T-cell (primary cell): ENCODE measurements at regions of chr6 and their contacts with region 1.

Region 1: DNA sequence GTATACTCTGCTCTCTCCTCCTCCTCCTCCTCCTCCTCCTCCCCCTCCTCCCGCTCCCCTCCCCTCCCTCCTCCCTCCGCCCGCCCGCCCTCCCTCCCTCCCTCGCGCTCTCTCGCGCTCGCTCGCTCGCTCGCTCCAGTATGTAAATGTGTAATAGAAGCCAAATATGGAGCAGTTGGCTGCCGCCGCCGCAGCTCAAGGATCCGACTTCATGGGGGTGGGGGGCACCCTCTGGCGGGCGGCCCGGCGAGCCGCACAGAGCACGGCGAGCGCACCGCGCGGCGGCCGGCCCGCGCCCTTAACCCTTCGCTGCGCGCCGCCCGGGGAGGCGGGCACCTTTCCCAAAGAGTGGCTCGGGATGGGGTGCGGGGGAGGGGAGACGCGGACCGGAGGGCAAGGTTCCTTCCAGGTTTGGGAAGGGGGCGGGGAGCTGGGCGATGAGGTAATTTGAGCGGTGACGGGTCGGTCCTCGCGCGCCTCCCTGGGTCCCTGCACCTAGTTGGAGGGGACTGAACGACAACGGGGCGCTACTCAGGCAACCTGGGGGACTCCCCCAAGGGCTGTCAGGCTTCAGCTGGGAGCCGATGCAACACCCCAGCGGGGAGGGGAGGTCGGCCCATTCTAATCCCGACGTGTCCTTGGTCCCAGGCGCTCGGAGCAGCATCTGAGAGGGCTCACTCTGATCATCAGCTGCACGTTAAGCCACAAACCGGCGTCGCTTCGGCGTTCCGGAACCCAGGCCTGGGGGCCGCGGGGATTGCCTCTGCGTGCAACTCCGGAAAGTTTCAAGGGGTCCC is 409 bp upstream of the ATXN1 start:
- DNase-seq: peak; percentile 66 to 91 (median 83)
- ATAC-seq: peak; percentile 64 to 74 (median 70)
- H3K4me3 ChIP-seq: peak overlapping the region; percentile 78 to 92
- H3K4me3 Mint-ChIP-seq: peak overlapping the region; percentile 97 to 99 (median 97)
- H3K27ac ChIP-seq: peak overlapping the region; percentile 99
- H3K27ac Mint-ChIP-seq: peak overlapping the region; percentile 97 to 98
- H3K4me1 ChIP-seq: peaks cover 8 to 19% of the 10 kb centered on the region in 2 experiments
- H3K4me1 Mint-ChIP-seq: peaks cover 47 to 63% (median 61%) of the 10 kb centered on the region in 3 donors
- H3K27me3 ChIP-seq: no peaks in the 10 kb centered on the region
- H3K27me3 Mint-ChIP-seq: no peaks in the 10 kb centered on the region

Region 2: DNA sequence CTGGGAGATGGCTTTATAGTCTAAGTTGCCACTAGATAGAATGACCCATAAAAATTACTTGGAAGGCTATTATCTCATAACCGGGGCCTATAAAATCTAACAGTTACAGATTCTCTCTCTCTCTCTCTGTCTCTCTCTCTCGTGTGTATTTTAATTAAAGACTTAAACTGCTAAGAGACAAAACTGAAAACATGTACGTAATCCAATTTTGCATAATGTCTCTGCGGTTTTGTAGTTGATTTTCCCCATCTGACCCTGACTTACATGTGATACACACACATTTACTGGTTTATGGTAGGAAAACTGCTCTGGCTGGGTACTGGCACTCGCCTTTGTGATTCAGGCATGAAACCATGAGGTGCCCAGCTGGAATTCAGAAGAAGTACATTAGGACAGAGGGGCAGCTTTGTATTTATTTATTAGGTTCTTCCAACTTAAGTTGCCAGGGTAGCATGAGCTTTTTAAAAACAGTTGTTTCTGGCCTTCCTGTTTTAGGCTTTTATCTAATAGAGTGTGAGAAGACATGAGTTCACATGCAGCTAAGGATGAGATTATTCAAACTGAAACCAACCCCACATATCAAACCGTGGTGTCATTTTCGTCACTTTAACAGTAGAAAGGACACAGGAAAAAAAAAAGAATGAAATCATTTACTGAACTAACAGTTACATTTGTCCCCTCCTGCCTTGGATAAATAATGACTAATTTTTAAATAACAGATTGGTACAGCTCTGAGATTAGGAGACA is 340.8 kb before region 1 on chr6:
- CTCF ChIA-PET with region 1: no interaction called
- POLR2A ChIA-PET with region 1: interaction called in 1 of 2 experiments, 12 read pairs
- DNase-seq: peak in 25 of 35 experiments; percentile 12 to 82 (median 32)
- ATAC-seq: peak; percentile 71 to 83 (median 76)
- H3K4me3 ChIP-seq: peak overlapping the region in 1 of 2 donors; percentile 28
- H3K4me3 Mint-ChIP-seq: peak overlapping the region; percentile 69 to 75 (median 72)
- H3K27ac ChIP-seq: peak overlapping the region; percentile 85
- H3K27ac Mint-ChIP-seq: peak overlapping the region; percentile 88 to 95
- H3K4me1 ChIP-seq: peaks cover 2 to 36% of the 10 kb centered on the region in 2 experiments
- H3K4me1 Mint-ChIP-seq: peaks cover 46 to 66% (median 61%) of the 10 kb centered on the region in 3 donors
- H3K27me3 ChIP-seq: no peaks in the 10 kb centered on the region
- H3K27me3 Mint-ChIP-seq: no peaks in the 10 kb centered on the region

Region 3: DNA sequence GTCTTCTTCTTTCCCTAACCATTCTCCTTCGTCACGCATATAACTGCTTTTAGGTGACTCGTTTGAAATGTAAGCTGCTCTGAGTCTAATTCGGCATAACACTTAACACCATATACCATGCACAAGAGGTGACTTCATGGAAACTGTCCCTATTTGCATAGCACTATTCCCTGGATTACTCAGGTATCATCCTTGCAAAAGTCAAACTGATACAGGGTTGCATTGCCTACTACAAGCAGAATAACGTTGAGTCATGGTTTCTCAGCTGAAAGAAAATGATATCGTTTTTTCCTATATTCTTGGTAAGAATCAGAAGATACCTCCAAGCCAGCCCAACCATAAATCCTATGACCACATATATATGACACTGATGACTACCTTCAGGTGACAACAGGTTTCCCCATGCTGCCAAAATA is 227.9 kb before region 1 on chr6:
- CTCF ChIA-PET with region 1: no interaction called
- POLR2A ChIA-PET with region 1: no interaction called
- DNase-seq: no peak
- ATAC-seq: no peak
- H3K4me3 ChIP-seq: no peak overlapping the region
- H3K4me3 Mint-ChIP-seq: no peak overlapping the region
- H3K27ac ChIP-seq: no peak overlapping the region
- H3K27ac Mint-ChIP-seq: no peak overlapping the region
- H3K4me1 ChIP-seq: no peaks in the 10 kb centered on the region
- H3K4me1 Mint-ChIP-seq: peaks cover 6 to 14% (median 6%) of the 10 kb centered on the region in 3 donors
- H3K27me3 ChIP-seq: no peaks in the 10 kb centered on the region
- H3K27me3 Mint-ChIP-seq: no peaks in the 10 kb centered on the region

Region 4: GRCh38 chr6:16644540-16645250 is 117.0 kb before region 1 on chr6:
- CTCF ChIA-PET with region 1: interaction called in 1 of 2 experiments, 3 read pairs
- POLR2A ChIA-PET with region 1: interaction called in 1 of 2 experiments, 17 read pairs
- DNase-seq: no peak
- ATAC-seq: no peak
- H3K4me3 ChIP-seq: no peak overlapping the region
- H3K4me3 Mint-ChIP-seq: no peak overlapping the region
- H3K27ac ChIP-seq: no peak overlapping the region
- H3K27ac Mint-ChIP-seq: no peak overlapping the region
- H3K4me1 ChIP-seq: no peaks in the 10 kb centered on the region
- H3K4me1 Mint-ChIP-seq: peaks cover 8 to 19% (median 10%) of the 10 kb centered on the region in 3 donors
- H3K27me3 ChIP-seq: no peaks in the 10 kb centered on the region
- H3K27me3 Mint-ChIP-seq: no peaks in the 10 kb centered on the region

Region 5: DNA sequence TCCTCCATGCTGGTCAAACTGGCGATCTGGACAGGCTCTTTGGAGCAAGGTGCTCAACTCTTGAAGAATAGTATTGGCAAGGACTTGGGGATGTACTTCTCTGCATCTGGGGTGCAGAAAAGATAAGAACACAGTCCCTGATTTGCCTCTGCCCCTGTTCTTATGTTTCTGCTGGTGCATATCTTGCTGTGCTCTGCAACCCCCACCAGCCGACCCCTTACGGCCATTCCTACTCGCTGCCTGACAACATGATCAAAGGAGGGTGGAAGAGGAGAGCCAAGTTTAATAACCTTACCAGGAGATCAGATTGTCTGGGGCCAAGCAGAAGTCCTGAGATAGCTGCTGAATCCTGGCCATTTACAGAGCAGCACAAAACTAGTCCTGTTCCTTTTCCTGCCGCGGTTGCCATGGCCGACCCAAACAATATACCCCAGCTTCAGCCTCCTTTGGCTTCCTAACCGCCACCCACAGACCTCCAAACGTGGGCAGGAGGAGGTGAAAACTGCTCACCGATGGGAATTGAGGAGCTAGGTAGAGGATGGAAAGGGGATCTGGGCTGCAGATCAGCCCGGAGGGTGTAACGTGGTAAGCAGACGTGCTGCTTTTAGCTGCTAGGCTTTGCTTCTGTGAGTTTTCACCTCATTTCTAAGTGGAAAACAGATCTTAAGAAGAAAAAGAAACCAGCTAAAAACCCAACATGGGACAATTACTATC is 61.3 kb before region 1 on chr6:
- CTCF ChIA-PET with region 1: interaction called in 1 of 2 experiments, 17 read pairs
- POLR2A ChIA-PET with region 1: interaction called, 3 to 17 read pairs
- DNase-seq: peak in 24 of 35 experiments; percentile 16 to 63 (median 30)
- ATAC-seq: peak; percentile 40 to 72 (median 52)
- H3K4me3 ChIP-seq: peak overlapping the region; percentile 51 to 55
- H3K4me3 Mint-ChIP-seq: peak overlapping the region; percentile 73 to 86 (median 81)
- H3K27ac ChIP-seq: peak overlapping the region; percentile 83
- H3K27ac Mint-ChIP-seq: peak overlapping the region; percentile 92 to 96
- H3K4me1 ChIP-seq: peaks cover 2 to 40% of the 10 kb centered on the region in 2 experiments
- H3K4me1 Mint-ChIP-seq: peaks cover 59 to 75% (median 70%) of the 10 kb centered on the region in 3 donors
- H3K27me3 ChIP-seq: no peaks in the 10 kb centered on the region
- H3K27me3 Mint-ChIP-seq: no peaks in the 10 kb centered on the region

Region 6: GRCh38 chr6:16731478-16732051 is 30.1 kb before region 1 on chr6:
- CTCF ChIA-PET with region 1: interaction called in 1 of 2 experiments, 18 read pairs
- POLR2A ChIA-PET with region 1: interaction called, 4 to 5 read pairs
- DNase-seq: peak in 9 of 35 experiments; percentile 9 to 54 (median 21)
- ATAC-seq: peak; percentile 52 to 73 (median 68)
- H3K4me3 ChIP-seq: peak overlapping the region in 1 of 2 donors; percentile 6
- H3K4me3 Mint-ChIP-seq: peak overlapping the region; percentile 22 to 61 (median 57)
- H3K27ac ChIP-seq: peak overlapping the region; percentile 69
- H3K27ac Mint-ChIP-seq: peak overlapping the region; percentile 77
- H3K4me1 ChIP-seq: peaks cover 6 to 31% of the 10 kb centered on the region in 2 experiments
- H3K4me1 Mint-ChIP-seq: peaks cover 28 to 60% (median 44%) of the 10 kb centered on the region in 3 donors
- H3K27me3 ChIP-seq: no peaks in the 10 kb centered on the region
- H3K27me3 Mint-ChIP-seq: no peaks in the 10 kb centered on the region

Region 7: GRCh38 chr6:16747232-16748024 is 14.2 kb before region 1 on chr6:
- CTCF ChIA-PET with region 1: interaction called, 7 to 13 read pairs
- POLR2A ChIA-PET with region 1: interaction called, 10 to 28 read pairs
- DNase-seq: no peak
- ATAC-seq: no peak
- H3K4me3 ChIP-seq: no peak overlapping the region
- H3K4me3 Mint-ChIP-seq: no peak overlapping the region
- H3K27ac ChIP-seq: no peak overlapping the region
- H3K27ac Mint-ChIP-seq: peak overlapping the region in 1 of 2 donors; percentile 47
- H3K4me1 ChIP-seq: peaks cover 0 to 13% of the 10 kb centered on the region in 2 experiments
- H3K4me1 Mint-ChIP-seq: peaks cover 49 to 79% (median 72%) of the 10 kb centered on the region in 3 donors
- H3K27me3 ChIP-seq: no peaks in the 10 kb centered on the region
- H3K27me3 Mint-ChIP-seq: no peaks in the 10 kb centered on the region